ENCODE measurements at regions of chr1 and their contacts with region 1.

Region 1: GRCh38 chr1:176897350-176898236 is 266.9 kb downstream of the ASTN1 start:
- DNase-seq: peak; percentile 72
- ATAC-seq: peak; percentile 65

Region 2: GRCh38 chr1:176949033-176949662 is 51.6 kb after region 1 on chr1:
- intact Hi-C with region 1: loop called (anchors 5 kb)
- DNase-seq: peak; percentile 59
- ATAC-seq: peak; percentile 65

Region 3: GRCh38 chr1:177181631-177182291 is 284.2 kb after region 1 on chr1:
- intact Hi-C with region 1: loop called (anchors 2 kb)
- DNase-seq: peak; percentile 61
- ATAC-seq: peak; percentile 93

Region 4: DNA sequence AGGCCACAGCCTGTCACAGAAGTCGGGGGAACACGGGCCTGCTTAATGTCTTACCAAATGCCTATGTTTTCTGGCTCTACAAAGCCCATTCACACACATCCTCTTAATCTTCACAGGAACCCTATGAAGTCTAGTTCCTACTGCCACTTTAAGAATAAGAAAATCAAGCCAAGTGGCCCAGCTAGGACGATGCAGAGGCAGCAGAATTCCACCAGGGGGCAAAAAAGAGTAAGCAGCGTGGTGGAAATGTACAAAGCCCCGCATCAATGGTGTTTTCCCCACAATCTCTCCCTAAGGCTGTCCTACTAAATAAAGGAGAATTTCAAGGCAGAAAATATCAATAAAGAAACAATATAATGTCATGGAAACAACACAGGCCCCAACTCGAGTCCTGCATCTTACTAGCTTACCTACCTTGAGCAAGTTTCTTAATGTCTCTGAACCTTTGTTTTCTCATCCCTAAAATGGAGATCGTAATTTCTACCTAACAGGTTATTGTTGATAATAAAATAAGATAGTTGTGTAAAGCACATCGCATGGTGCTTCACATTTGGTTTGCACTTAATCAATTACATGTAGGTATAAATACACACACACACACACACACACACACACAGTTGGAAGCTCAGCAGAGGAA is 1050.9 kb after region 1 on chr1:
- intact Hi-C with region 1: loop called (anchors 10 kb)
- DNase-seq: no peak
- ATAC-seq: peak; percentile 70